ENCODE measurements at regions of chrX and their contacts with region 1.

Region 1: DNA sequence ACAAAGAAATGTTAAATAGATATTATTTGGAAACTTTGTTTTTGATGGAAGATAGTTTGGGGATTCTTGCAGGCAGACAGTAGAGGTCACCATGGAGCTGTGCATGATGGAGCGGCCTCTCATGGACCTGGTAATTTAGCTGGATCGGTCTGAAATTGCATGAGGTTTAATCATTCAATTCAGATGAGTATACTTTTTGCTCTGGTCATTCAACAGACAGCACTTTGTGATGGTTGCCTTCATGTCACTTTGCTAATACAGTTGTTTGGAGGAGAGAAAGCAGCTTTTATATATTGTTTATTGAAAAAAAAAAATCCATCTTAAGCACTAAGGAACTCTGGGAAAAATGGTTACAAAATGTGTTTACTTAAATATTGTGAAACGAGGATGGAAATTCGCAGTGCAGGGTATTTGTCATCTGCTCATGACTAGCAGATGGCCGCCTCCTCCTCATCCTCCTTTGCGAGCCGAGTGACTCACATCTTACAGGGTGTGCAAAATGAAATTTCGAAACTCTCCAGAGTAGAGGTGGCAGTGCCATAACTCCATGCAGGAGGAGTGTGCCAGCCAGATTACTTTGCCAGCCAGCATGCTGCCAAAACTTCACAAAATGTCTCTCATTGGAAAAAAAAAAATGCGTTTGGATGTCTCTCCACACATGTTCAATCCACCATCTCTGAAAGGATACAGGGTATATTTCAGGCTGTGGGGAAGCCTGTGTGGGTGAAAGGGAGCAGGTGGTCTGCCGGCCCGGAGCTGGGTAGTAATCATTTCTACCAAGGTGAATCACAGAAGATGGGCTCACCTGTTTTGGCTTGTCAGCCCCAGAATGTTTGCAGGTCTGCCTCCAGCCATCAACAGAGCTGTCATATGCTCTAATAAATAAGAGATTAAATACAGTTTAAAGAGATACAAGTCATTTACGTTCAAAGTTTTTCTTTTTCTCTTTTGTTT is 314.9 kb upstream of the DIPK2B start:
- DNase-seq: peak; percentile 44
- H3K4me3 ChIP-seq: no peak overlapping the region
- H3K27ac ChIP-seq: no peak overlapping the region
- H3K4me1 ChIP-seq: no peaks in the 10 kb centered on the region
- H3K27me3 ChIP-seq: no peaks in the 10 kb centered on the region
- CTCF ChIP-seq: peak; percentile 45

Region 2: DNA sequence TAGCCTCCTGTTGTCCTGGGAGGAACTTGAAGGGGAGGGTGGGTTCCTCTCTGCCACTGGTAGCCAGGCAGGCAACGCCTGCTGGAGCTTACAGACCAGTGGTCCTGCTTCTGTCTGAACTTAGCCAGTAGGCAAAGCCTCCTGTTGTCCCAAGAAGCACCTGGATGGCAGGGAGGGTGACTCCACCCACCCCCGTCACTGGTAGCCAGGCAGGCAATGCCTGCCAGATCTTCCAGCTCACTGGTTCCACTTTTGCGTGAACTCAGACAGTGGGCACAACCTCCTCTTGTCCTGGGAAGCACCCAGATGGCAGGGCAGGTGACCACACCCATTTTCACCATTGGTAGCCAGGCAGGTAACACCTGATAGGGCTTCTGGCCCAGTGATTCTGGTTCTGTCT is 111.3 kb before region 1 on chrX:
- intact Hi-C with region 1: no loop called
- DNase-seq: no peak
- H3K4me3 ChIP-seq: no peak overlapping the region
- H3K27ac ChIP-seq: no peak overlapping the region
- H3K4me1 ChIP-seq: no peaks in the 10 kb centered on the region
- H3K27me3 ChIP-seq: no peaks in the 10 kb centered on the region
- CTCF ChIP-seq: no peak

Region 3: DNA sequence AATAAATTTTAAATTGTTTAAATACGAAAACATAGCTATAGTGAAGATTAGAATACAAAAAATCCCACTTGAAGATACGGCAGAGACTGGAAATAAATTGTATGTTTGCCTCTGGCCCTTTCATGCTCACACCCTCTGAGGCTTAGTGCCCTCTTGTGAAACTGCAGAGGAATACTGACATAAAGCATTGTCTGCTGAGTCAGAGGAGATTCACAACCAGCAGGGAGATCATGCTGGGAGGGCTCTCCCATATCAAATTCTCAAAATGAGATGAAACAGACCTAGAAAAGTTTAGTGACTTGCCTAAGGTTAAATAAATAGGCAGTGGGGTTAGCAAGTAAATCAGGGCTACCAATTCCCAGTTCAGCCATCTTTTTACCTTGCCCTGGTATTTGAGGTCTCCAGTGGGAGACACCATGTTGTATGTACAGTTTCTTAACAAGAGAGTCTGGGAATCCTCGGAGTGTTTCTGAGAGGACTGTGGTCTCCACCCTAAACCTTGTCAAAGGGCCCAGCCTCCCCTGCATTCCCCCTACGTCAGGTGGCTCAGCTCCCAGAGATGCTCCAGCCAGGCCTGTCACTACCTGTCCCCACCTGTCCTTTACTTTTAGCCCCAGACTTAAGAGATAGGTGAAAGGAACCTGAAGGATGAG is 266.5 kb after region 1 on chrX:
- intact Hi-C with region 1: loop called (anchors 10 kb)
- DNase-seq: no peak
- H3K4me3 ChIP-seq: no peak overlapping the region
- H3K27ac ChIP-seq: no peak overlapping the region
- H3K4me1 ChIP-seq: no peaks in the 10 kb centered on the region
- H3K27me3 ChIP-seq: no peaks in the 10 kb centered on the region
- CTCF ChIP-seq: no peak

Measured in colonic mucosa (tissue), 4 donors.